MCF 10A (cell line): ENCODE measurements at regions of chr17 and their contacts with region 1.

Region 1: GRCh38 chr17:44878627-44879221 is 20.5 kb downstream of the EFTUD2 start:
- DNase-seq: peak; percentile 42
- H3K4me3 Mint-ChIP-seq: no peak overlapping the region
- H3K27ac Mint-ChIP-seq: no peak overlapping the region
- H3K4me1 Mint-ChIP-seq: no peaks in the 10 kb centered on the region
- H3K27me3 Mint-ChIP-seq: no peaks in the 10 kb centered on the region
- CTCF ChIP-seq: peak; percentile 41

Region 2: DNA sequence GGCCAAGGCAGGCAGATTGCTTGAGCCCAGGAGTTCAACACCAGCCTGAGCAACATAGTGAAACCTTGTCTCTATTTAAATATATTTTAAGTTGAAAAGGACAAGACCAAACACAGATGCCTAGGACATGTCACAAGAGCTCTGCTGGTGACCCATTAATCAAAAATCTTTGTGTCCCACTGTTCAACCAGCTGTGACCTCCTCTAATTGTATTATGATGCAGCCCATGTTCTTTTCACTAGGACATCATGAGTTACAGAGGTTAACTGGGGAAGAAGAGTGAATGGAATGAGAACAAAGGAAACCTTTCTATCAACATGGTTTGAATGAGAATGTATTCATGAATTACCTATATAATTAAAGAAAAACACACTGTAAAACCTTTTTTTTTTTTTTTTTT is 13.5 kb after region 1 on chr17:
- CTCF ChIA-PET with region 1: interaction called, 13 read pairs
- POLR2A ChIA-PET with region 1: interaction called, 4 read pairs
- intact Hi-C with region 1: no loop called
- DNase-seq: no peak
- H3K4me3 Mint-ChIP-seq: no peak overlapping the region
- H3K27ac Mint-ChIP-seq: no peak overlapping the region
- H3K4me1 Mint-ChIP-seq: no peaks in the 10 kb centered on the region
- H3K27me3 Mint-ChIP-seq: no peaks in the 10 kb centered on the region
- CTCF ChIP-seq: no peak